Activated CD4-positive, alpha-beta T cell treated with anti-CD3 and anti-CD28 coated beads for 36 hours (primary cell): ENCODE measurements at regions of chr14 and their contacts with region 1.

Region 1: GRCh38 chr14:94129111-94129757 is at the start of gene IFI27L2:
- DNase-seq: peak; percentile 85
- ATAC-seq: peak; percentile 97
- H3K4me3 Mint-ChIP-seq: peak within 1 kb of the TSS; percentile 78
- H3K27ac Mint-ChIP-seq: peak within 1 kb of the TSS; percentile 37
- H3K4me1 Mint-ChIP-seq: peaks cover 21% of the 10 kb centered on the region
- H3K27me3 Mint-ChIP-seq: peaks cover 4% of the 10 kb centered on the region
- total RNA-seq, gene IFI27L2: 57.3 to 66.9 TPM

Region 2: GRCh38 chr14:93880021-93880820 is 249.0 kb before region 1 on chr14:
- CTCF ChIA-PET with region 1: no interaction called
- POLR2A ChIA-PET with region 1: no interaction called
- intact Hi-C with region 1: no loop called
- DNase-seq: no peak
- ATAC-seq: no peak
- H3K4me3 Mint-ChIP-seq: no peak overlapping the region
- H3K27ac Mint-ChIP-seq: no peak overlapping the region
- H3K4me1 Mint-ChIP-seq: peaks cover 4% of the 10 kb centered on the region
- H3K27me3 Mint-ChIP-seq: peaks cover 13% of the 10 kb centered on the region

Region 3: GRCh38 chr14:94026173-94026888 is 102.9 kb before region 1 on chr14 and contains the start of gene OTUB2:
- CTCF ChIA-PET with region 1: interaction called, 5 read pairs
- POLR2A ChIA-PET with region 1: no interaction called
- intact Hi-C with region 1: loop called in 1 of 2 experiments (anchors 1 kb)
- DNase-seq: peak; percentile 98
- ATAC-seq: peak; percentile 99
- H3K4me3 Mint-ChIP-seq: peak within 1 kb of the TSS; percentile 54
- H3K27ac Mint-ChIP-seq: no peak within 1 kb of the TSS
- H3K4me1 Mint-ChIP-seq: peaks cover 32% of the 10 kb centered on the region
- H3K27me3 Mint-ChIP-seq: no peaks in the 10 kb centered on the region
- total RNA-seq, gene OTUB2: 0.75 to 0.93 TPM

Region 4: DNA sequence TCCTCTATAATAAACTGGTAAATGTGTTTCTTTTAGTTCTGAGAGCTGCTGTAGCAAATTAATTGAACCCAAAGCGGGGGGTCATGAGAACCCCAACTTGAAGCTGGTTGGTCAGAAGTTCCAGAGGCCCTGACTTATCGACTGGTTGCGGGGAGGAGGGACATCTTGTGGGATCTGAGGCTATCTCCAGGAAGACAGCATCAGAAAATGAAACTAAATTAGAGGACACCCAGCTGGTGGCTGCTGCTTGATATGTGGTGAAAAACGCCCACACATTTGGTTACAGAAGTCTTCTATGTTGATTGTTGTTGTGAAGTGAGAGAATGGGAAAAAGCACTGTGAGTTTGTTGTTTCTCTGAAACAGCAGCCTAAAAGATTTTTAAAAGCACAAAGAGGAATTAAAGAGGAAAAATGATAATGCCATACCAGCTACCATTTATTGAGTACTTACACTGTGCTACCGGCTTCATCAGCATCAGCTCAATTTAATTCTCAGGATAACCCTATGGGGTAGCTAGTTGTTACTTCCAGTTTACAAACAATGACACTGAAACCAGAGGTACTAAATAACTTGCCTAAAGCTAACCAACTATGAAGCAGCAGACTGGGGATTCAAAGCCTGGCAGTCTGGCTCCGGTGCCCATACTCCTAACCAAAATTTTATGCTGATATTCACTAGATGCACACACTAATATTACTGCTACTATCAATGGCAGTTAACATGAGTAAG is 72.5 kb before region 1 on chr14:
- CTCF ChIA-PET with region 1: interaction called, 11 read pairs
- POLR2A ChIA-PET with region 1: no interaction called
- intact Hi-C with region 1: no loop called
- DNase-seq: peak; percentile 35
- ATAC-seq: peak; percentile 64
- H3K4me3 Mint-ChIP-seq: no peak overlapping the region
- H3K27ac Mint-ChIP-seq: peak overlapping the region; percentile 78
- H3K4me1 Mint-ChIP-seq: peaks cover 42% of the 10 kb centered on the region
- H3K27me3 Mint-ChIP-seq: no peaks in the 10 kb centered on the region

Region 5: GRCh38 chr14:94173885-94174603 is 44.8 kb after region 1 on chr14 and contains the start of gene PPP4R4:
- CTCF ChIA-PET with region 1: interaction called, 76 read pairs
- POLR2A ChIA-PET with region 1: no interaction called
- intact Hi-C with region 1: loop called in 1 of 2 experiments (anchors 1 kb)
- DNase-seq: peak; percentile 96
- ATAC-seq: peak; percentile 89
- H3K4me3 Mint-ChIP-seq: peak within 1 kb of the TSS; percentile 81
- H3K27ac Mint-ChIP-seq: peak within 1 kb of the TSS; percentile 86
- H3K4me1 Mint-ChIP-seq: peaks cover 44% of the 10 kb centered on the region
- H3K27me3 Mint-ChIP-seq: peaks cover 5% of the 10 kb centered on the region
- total RNA-seq, gene PPP4R4: 21.4 TPM

Region 6: DNA sequence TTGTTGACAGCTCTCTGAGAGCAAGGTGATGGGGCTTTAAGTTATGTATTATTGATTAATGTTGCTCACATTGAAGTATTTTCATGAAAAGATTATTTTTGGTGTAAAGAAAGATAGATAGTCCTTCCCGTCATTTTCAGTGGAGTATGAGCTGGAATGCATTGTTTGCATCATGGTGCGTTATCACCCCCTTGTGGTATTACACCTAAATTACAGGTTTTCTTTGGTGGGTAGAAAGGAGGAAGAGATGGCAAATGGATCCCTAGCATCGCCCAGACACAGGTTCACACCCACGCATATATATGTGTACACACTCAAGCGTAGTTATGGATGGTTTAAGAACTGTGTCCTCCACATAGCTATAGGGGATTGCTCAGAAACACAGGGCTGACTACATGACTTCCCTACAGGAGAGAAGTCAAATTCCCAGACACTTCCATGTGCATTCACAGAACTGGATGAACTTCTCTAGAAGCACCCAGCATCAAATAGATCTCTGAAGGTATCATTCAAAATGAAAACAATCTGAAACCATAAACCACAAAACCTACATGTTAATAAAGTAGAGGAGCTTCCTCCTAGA is 178.3 kb after region 1 on chr14:
- CTCF ChIA-PET with region 1: interaction called, 7 read pairs
- POLR2A ChIA-PET with region 1: no interaction called
- intact Hi-C with region 1: loop called in 1 of 2 experiments (anchors 5 kb)
- DNase-seq: no peak
- ATAC-seq: no peak
- H3K4me3 Mint-ChIP-seq: no peak overlapping the region
- H3K27ac Mint-ChIP-seq: no peak overlapping the region
- H3K4me1 Mint-ChIP-seq: no peaks in the 10 kb centered on the region
- H3K27me3 Mint-ChIP-seq: peaks cover 5% of the 10 kb centered on the region

Region 7: DNA sequence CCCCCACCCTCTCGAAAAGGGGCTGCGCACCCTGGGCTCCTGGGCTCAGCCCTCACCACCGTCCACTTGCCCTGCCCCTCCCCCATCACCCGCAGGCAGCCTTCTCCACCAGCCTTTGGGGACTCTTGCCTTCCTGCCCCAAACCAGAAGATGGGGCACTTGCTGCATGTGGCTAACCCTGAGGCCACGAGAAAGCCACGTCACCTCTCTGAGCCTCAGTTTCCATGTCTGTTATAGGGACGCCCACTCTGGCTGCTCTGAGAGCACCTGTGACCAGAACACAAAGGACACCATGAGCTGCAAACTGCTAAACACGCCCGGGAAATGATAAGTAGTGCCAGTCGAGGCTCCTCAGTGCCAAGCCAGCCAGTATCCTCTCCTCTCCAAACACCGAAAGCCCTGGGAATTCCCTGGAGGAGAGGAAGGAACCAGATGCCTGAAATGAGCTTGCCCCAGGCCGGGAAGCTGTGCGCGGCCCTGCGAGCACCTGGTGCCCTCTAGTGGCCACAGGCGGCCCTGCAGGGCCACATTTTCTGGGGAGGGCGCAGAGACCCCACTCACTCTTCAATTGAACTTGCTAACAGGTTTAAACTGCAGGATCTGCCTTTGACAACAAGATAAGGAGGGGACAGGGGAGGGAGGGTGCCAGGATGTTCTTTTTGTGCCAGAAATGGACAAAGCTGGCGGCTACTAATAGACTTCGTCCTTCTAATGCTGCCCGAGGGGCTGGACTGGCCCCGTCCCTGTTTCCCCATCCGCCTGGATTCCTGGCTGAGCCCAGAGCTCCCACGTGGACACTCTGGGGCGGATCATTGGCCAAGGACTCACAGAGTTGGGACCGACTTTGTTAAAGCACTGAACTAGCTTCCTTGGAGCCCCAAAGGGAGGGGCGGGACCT is 357.0 kb after region 1 on chr14:
- CTCF ChIA-PET with region 1: interaction called, 5 read pairs
- POLR2A ChIA-PET with region 1: no interaction called
- intact Hi-C with region 1: loop called (anchors 1 to 5 kb)
- DNase-seq: peak; percentile 70
- ATAC-seq: peak; percentile 62
- H3K4me3 Mint-ChIP-seq: no peak overlapping the region
- H3K27ac Mint-ChIP-seq: peak overlapping the region; percentile 27
- H3K4me1 Mint-ChIP-seq: peaks cover 29% of the 10 kb centered on the region
- H3K27me3 Mint-ChIP-seq: peaks cover 3% of the 10 kb centered on the region